Activated CD4-positive, alpha-beta T cell treated with anti-CD3 and anti-CD28 coated beads for 36 hours (primary cell): ENCODE measurements at regions of chr19 and their contacts with region 1.

Region 1: DNA sequence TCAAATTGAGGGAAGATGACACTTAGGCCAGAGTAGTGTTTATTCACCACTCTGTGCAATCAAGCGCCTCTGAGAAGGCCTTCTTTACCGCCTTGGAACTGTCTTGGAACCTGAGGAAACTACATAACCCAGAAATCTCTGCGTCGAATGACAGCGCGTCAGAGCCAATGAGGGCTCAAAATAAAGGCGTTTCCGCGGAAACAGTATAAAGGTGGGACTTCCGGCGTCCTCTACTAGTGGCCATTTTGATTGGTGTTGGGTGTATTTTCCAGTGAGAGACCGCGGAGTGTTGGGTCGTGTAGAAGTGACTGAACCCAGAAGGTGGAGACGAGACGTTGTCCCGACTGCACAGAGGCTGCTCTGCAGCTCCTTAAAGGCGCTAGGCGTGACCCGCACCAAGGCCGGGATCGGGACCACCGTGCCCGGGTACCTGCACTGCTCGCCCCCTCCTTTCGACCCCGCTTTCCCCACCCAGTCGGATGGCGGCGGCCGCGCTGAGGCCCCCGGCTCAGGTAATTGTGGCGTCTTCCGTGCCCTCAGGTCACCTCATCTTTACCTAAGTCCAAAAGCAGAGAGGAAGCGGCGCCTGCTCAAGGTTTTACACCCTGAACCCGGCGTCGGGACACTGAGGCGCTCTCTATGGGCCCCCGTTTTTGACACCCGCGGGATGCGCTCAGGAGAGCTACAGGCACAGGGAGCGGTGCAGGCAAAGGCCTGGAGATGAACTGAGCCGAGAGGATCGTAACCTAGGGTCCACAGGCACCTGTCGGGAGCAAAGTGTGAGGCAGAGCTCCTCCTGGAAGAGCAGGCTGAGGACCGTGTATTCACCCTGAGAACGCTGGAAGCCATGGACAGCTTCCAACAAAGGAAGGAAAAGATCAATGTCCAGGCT is at the start of gene ZNF776:
- DNase-seq: peak; percentile 89
- ATAC-seq: peak; percentile 98
- H3K4me3 Mint-ChIP-seq: peak within 1 kb of the TSS; percentile 93
- H3K27ac Mint-ChIP-seq: peak within 1 kb of the TSS; percentile 98
- H3K4me1 Mint-ChIP-seq: peaks cover 15% of the 10 kb centered on the region
- H3K27me3 Mint-ChIP-seq: no peaks in the 10 kb centered on the region
- total RNA-seq, gene ZNF776: 8.9 to 14.7 TPM

Region 2: DNA sequence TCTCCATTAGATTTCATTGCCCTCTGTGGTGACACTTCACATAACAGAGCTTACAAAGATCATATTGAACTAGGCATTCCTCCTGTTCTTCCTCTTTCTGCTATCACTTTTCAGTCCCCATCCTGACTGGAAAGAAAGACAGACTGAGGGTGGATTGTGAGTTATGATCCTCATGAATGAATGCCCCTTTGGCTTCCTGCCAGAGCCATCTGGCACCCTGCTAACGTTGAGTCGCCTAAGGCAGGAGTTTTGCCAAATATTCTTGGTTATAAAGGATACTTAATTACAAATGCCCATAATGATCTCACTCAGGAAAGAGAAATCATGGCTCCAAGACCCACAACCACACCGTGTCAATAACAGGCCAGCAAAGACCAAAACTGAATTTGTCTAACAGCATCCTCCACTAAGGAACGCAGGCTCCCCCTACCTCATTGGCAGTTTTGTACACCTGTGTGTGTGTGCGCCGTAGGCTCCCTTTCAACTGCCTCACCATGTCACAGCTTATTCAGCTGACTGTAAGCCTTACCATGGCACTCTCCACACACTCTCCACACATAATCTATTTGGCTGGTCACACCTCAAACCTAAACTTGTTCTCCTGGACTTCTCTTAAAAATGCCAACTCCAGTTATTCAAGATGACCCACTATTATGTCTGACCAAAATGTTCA is 98.4 kb before region 1 on chr19:
- CTCF ChIA-PET with region 1: no interaction called
- POLR2A ChIA-PET with region 1: no interaction called
- intact Hi-C with region 1: no loop called
- DNase-seq: no peak
- ATAC-seq: no peak
- H3K4me3 Mint-ChIP-seq: no peak overlapping the region
- H3K27ac Mint-ChIP-seq: no peak overlapping the region
- H3K4me1 Mint-ChIP-seq: peaks cover 2% of the 10 kb centered on the region
- H3K27me3 Mint-ChIP-seq: peaks cover 8% of the 10 kb centered on the region

Region 3: GRCh38 chr19:57682226-57682766 is 64.5 kb before region 1 on chr19:
- CTCF ChIA-PET with region 1: interaction called, 3 read pairs
- POLR2A ChIA-PET with region 1: no interaction called
- intact Hi-C with region 1: loop called in 1 of 2 experiments (anchors 1 kb)
- DNase-seq: no peak
- ATAC-seq: no peak
- H3K4me3 Mint-ChIP-seq: peak overlapping the region; percentile 85
- H3K27ac Mint-ChIP-seq: peak overlapping the region; percentile 93
- H3K4me1 Mint-ChIP-seq: peaks cover 31% of the 10 kb centered on the region
- H3K27me3 Mint-ChIP-seq: peaks cover under 1% of the 10 kb centered on the region

Region 4: DNA sequence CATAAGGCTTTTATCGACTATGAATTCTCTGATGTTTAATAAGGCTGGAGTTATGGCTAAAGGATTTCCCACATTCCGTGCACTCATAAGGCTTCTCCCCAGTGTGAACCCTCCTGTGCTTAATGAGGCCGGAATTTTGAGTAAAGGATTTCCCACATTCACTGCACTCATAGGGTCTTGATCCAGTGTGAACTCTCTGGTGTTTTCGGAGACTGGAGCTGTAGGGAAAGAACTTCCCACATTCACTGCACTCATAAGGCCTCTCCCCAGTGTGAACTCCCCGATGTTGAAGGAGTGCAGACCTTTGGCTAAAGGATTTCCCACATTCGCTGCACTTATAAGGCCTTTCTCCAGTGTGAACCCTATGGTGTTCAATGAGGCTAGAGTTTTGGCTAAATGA is 45.2 kb before region 1 on chr19:
- CTCF ChIA-PET with region 1: no interaction called
- POLR2A ChIA-PET with region 1: no interaction called
- intact Hi-C with region 1: no loop called
- DNase-seq: no peak
- ATAC-seq: no peak
- H3K4me3 Mint-ChIP-seq: no peak overlapping the region
- H3K27ac Mint-ChIP-seq: no peak overlapping the region
- H3K4me1 Mint-ChIP-seq: peaks cover 6% of the 10 kb centered on the region
- H3K27me3 Mint-ChIP-seq: no peaks in the 10 kb centered on the region

Region 5: DNA sequence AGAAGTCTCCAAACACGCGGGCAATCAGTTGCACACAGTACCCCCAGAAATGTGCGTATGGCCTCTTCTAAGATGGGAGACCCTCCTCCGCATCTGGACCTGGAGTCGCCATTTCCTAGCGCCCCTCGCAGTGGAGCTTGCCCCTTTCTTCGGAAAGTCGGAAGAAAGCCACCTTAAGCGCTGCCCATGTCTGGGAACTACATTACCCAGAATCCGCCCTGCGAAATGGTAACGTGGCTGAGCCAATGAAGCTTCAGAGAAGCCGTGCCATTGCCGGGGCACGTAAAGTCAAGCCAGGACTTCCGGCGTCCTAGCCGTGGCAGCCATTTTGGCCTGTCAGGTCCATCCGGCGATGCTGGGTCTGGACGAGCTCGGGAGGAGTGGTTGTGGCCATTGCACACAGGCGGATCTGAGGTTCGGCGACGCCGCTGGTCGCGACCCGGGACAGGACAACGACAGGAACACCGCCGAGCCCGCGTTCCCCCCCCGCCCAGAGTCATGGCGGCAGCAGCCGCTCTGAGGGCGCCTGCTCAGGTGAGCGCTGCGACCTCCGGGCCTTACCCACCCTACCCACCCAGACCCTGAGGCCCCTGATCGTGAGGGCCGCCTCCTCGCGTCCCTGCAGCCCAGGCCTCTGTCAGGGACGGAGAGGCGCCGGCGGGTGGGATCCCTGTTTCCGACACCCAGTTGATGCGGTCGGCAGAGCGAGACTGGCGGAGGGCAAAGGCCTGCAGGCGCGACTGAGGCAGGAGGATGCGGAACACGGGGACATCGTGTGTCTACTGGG is 22.7 kb after region 1 on chr19 and contains the start of gene ZNF586:
- CTCF ChIA-PET with region 1: no interaction called
- POLR2A ChIA-PET with region 1: no interaction called
- intact Hi-C with region 1: loop called (anchors 1 kb)
- DNase-seq: peak; percentile 93
- ATAC-seq: peak; percentile 99
- H3K4me3 Mint-ChIP-seq: peak within 1 kb of the TSS; percentile 90
- H3K27ac Mint-ChIP-seq: peak within 1 kb of the TSS; percentile 93
- H3K4me1 Mint-ChIP-seq: peaks cover 25% of the 10 kb centered on the region
- H3K27me3 Mint-ChIP-seq: no peaks in the 10 kb centered on the region
- total RNA-seq, gene ZNF586: 20.3 to 20.5 TPM

Region 6: GRCh38 chr19:57850553-57851017 is 103.8 kb after region 1 on chr19:
- CTCF ChIA-PET with region 1: no interaction called
- POLR2A ChIA-PET with region 1: no interaction called
- intact Hi-C with region 1: loop called in 1 of 2 experiments (anchors 1 kb)
- DNase-seq: peak; percentile 33
- ATAC-seq: no peak
- H3K4me3 Mint-ChIP-seq: peak overlapping the region; percentile 95
- H3K27ac Mint-ChIP-seq: peak overlapping the region; percentile 97
- H3K4me1 Mint-ChIP-seq: peaks cover 23% of the 10 kb centered on the region
- H3K27me3 Mint-ChIP-seq: no peaks in the 10 kb centered on the region

Region 7: DNA sequence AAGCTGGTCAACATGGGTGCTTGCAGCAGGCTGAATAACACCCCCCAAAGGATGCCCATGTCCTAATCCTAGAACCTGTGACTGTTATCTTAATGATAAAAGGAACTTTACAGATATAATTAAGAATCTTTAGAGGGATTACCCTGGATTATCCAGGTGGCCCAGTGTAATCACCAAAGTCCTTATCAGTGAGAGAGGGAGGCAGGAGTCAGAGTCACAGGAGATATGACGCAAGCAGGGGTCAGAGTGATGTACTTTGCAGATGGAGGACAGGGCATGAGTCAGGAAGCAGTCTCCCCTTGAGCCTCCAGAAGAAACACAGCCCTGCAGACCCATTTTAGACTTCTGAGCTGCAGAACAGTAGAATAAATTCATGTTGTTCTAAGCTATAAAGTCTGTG is 246.0 kb after region 1 on chr19:
- CTCF ChIA-PET with region 1: no interaction called
- POLR2A ChIA-PET with region 1: no interaction called
- intact Hi-C with region 1: no loop called
- DNase-seq: no peak
- ATAC-seq: no peak
- H3K4me3 Mint-ChIP-seq: no peak overlapping the region
- H3K27ac Mint-ChIP-seq: no peak overlapping the region
- H3K4me1 Mint-ChIP-seq: no peaks in the 10 kb centered on the region
- H3K27me3 Mint-ChIP-seq: no peaks in the 10 kb centered on the region